Psoas muscle (tissue), 8 donors: ENCODE measurements at regions of chr9 and their contacts with region 1.

Region 1: DNA sequence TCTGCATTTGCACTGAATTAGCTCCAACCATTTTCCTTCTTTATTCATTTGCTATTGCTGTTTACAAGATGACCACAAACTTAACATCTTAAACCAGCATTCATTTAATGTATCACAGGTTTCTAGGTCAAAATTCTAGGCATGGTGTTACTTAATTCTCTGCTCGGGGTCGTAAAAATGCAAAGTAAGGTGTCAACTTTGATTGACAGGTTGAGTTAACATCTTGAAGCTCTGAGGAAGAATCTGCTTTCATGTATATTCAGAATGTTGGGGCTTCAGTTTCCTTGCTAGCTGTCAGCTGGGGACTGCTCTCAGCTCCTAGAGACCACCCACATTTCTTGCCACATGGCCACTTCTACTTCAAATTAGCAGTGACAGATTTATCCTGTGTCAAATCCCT is 348.7 kb upstream of the GRIN3A start:
- DNase-seq: no peak
- ATAC-seq: no peak
- H3K4me3 ChIP-seq: no peak overlapping the region
- H3K27ac ChIP-seq: no peak overlapping the region
- H3K4me1 ChIP-seq: no peaks in the 10 kb centered on the region
- H3K27me3 ChIP-seq: no peaks in the 10 kb centered on the region
- CTCF ChIP-seq: no peak

Region 2: DNA sequence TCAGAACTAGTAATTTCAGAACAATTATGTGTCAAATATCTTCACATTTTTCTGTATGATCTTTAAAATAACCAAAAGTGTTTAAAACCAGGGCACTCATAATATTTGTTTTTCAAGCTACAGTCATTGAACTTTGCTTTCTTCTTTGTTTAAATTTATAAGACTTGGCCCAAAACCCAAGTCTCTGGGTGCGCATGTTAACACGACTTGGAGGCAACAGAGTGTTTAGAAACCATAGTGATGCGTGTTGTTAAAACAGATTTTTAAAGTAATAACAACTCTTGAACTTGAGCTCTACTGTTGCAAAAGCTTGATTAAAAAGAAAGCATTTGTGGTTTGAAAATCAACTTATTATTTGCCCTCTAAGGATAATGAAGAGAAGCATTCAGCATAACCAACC is 322.7 kb before region 1 on chr9:
- intact Hi-C with region 1: no loop called
- DNase-seq: no peak
- ATAC-seq: no peak
- H3K4me3 ChIP-seq: no peak overlapping the region
- H3K27ac ChIP-seq: no peak overlapping the region
- H3K4me1 ChIP-seq: no peaks in the 10 kb centered on the region
- H3K27me3 ChIP-seq: no peaks in the 10 kb centered on the region
- CTCF ChIP-seq: no peak

Region 3: GRCh38 chr9:102032614-102033013 is 54.5 kb before region 1 on chr9:
- intact Hi-C with region 1: loop called in 1 of 2 experiments (anchors 10 kb)
- DNase-seq: no peak
- ATAC-seq: no peak
- H3K4me3 ChIP-seq: no peak overlapping the region
- H3K27ac ChIP-seq: no peak overlapping the region
- H3K4me1 ChIP-seq: no peaks in the 10 kb centered on the region
- H3K27me3 ChIP-seq: no peaks in the 10 kb centered on the region
- CTCF ChIP-seq: no peak

Region 4: DNA sequence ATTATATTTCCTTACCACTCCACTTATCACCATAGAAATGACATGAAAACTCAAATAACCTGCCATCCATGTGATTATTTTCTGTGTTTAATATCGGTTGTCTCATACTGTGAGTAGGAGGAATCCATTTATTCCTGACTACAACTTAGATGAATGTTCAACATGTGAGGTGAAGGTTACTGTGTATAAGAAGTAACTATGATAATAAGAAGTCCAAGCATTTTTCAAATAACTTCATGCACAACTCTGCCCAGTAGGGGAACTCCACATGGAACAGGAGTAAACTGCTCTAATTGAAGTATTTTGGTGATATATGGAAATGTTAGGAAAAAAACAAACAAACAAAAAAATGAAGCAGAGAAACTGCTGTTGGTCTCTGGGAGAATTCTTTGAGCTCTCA is 98.8 kb after region 1 on chr9:
- intact Hi-C with region 1: no loop called
- DNase-seq: no peak
- ATAC-seq: no peak
- H3K4me3 ChIP-seq: no peak overlapping the region
- H3K27ac ChIP-seq: no peak overlapping the region
- H3K4me1 ChIP-seq: no peaks in the 10 kb centered on the region
- H3K27me3 ChIP-seq: peaks cover 0 to 2% (median 0%) of the 10 kb centered on the region in 3 donors
- CTCF ChIP-seq: no peak

Region 5: DNA sequence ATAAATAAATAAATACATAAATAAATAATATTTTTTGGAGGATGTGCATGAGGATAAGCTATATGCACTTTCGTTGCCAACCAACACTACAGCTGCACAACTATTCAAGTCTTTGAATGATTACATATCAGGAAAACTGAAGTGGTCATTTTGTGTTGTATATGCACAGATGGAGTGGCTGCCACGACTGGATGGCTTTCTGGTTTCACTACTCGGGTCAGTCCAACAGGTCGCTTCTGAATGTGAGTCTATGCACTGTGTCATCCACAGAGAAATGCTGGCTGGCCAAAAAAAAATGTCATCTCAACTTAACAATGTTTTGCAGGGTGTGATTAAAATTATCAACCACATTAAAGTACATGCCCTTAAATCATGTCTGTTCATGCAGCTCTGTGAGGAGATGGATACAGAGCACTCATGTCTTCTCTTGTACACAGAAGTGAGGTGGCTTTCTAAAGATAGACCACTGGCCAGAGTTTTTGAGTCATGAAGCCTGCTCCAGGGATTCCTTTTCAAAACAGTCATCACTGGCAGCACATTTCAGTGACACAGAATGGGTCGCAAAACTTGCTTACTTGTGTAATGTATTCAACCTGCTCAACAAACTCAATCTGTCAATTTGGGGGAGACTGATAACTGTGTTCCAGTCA is 318.2 kb after region 1 on chr9:
- intact Hi-C with region 1: no loop called
- DNase-seq: no peak
- ATAC-seq: peak in 2 of 4 donors; percentile 77 to 96
- H3K4me3 ChIP-seq: no peak overlapping the region
- H3K27ac ChIP-seq: no peak overlapping the region
- H3K4me1 ChIP-seq: no peaks in the 10 kb centered on the region
- H3K27me3 ChIP-seq: no peaks in the 10 kb centered on the region
- CTCF ChIP-seq: no peak